Activated CD4-positive, alpha-beta T cell treated with anti-CD3 and anti-CD28 coated beads for 36 hours (primary cell): ENCODE measurements at regions of chr4 and their contacts with region 1.

Region 1: DNA sequence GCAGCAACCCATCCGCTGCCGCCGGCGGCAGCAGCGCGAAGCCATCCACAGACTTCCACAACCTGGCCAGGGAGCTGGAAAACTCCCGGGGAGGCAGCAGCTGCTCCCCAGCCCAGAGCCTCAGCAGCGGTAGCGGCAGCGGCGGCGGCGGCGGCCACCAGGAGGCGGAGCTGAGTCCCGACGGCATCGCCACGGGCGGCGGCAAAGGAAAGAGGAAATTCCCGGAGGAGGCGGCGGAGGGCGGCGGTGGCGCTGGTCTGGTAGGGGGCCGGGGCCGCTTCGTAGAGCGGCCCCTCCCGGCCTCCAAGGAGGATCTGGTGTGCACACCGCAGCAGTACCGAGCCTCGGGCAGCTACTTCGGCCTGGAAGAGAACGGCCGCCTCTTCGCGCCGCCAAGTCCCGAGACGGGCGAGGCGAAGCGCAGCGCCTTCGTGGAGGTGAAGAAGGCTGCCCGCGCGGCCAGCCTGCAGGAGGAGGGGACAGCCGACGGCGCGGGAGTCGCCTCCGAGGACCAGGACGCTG is 4.9 kb downstream of the PRDM8 start:
- DNase-seq: peak; percentile 88
- ATAC-seq: peak; percentile 66
- H3K4me3 Mint-ChIP-seq: peak overlapping the region; percentile 68
- H3K27ac Mint-ChIP-seq: peak overlapping the region; percentile 64
- H3K4me1 Mint-ChIP-seq: peaks cover 30% of the 10 kb centered on the region
- H3K27me3 Mint-ChIP-seq: peaks cover 17% of the 10 kb centered on the region

Region 2: GRCh38 chr4:78938868-78939666 is 1263.2 kb before region 1 on chr4 and contains the start of gene PAQR3:
- CTCF ChIA-PET with region 1: no interaction called
- POLR2A ChIA-PET with region 1: no interaction called
- intact Hi-C with region 1: loop called in 1 of 2 experiments (anchors 5 kb)
- DNase-seq: peak; percentile 91
- ATAC-seq: peak; percentile 95
- H3K4me3 Mint-ChIP-seq: peak within 1 kb of the TSS; percentile 88
- H3K27ac Mint-ChIP-seq: peak within 1 kb of the TSS; percentile 83
- H3K4me1 Mint-ChIP-seq: peaks cover 30% of the 10 kb centered on the region
- H3K27me3 Mint-ChIP-seq: peaks cover 8% of the 10 kb centered on the region
- total RNA-seq, gene PAQR3: 7.8 to 8.8 TPM

Region 3: GRCh38 chr4:79917246-79917645 is 285.0 kb before region 1 on chr4:
- CTCF ChIA-PET with region 1: no interaction called
- POLR2A ChIA-PET with region 1: no interaction called
- intact Hi-C with region 1: loop called (anchors 5 kb)
- DNase-seq: peak; percentile 67
- ATAC-seq: peak; percentile 60
- H3K4me3 Mint-ChIP-seq: no peak overlapping the region
- H3K27ac Mint-ChIP-seq: peak overlapping the region; percentile 58
- H3K4me1 Mint-ChIP-seq: peaks cover 19% of the 10 kb centered on the region
- H3K27me3 Mint-ChIP-seq: no peaks in the 10 kb centered on the region

Region 4: DNA sequence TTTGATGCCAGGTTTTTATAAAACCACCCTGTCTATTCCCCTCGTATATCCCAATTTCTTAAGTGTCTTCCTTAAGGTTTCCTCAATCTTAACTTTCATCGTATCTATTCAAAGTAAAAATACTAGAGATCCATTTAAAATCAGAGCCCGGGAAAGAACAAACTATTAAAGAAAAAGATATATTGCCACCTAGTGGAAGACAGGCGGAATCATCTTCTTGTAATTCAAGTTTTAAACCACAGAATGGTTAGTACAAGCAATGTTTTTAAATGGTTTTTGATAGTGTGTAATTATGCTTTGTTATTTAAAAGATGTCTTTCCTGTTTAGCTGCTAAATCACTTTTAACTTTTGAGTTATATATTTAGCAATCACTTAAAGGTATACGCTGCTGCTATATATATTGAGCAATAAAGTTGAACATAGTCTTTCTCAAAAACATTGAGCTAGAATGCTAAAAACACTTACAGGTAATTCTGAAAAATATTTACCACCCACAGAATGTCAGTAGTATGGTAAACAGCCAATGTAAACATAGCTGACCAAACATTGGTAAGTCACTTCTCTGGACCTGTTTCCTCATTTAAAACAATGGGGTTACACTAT is 13.3 kb after region 1 on chr4:
- CTCF ChIA-PET with region 1: interaction called, 12 read pairs
- POLR2A ChIA-PET with region 1: no interaction called
- intact Hi-C with region 1: loop called (anchors 1 kb)
- DNase-seq: no peak
- ATAC-seq: no peak
- H3K4me3 Mint-ChIP-seq: no peak overlapping the region
- H3K27ac Mint-ChIP-seq: no peak overlapping the region
- H3K4me1 Mint-ChIP-seq: peaks cover 2% of the 10 kb centered on the region
- H3K27me3 Mint-ChIP-seq: peaks cover 17% of the 10 kb centered on the region

Region 5: GRCh38 chr4:81052119-81053068 is 850.1 kb after region 1 on chr4:
- CTCF ChIA-PET with region 1: no interaction called
- POLR2A ChIA-PET with region 1: no interaction called
- intact Hi-C with region 1: loop called in 1 of 2 experiments (anchors 5 kb)
- DNase-seq: peak; percentile 64
- ATAC-seq: no peak
- H3K4me3 Mint-ChIP-seq: no peak overlapping the region
- H3K27ac Mint-ChIP-seq: no peak overlapping the region
- H3K4me1 Mint-ChIP-seq: no peaks in the 10 kb centered on the region
- H3K27me3 Mint-ChIP-seq: peaks cover 14% of the 10 kb centered on the region